ENCODE measurements at regions of chr15 and their contacts with region 1.

Region 1: DNA sequence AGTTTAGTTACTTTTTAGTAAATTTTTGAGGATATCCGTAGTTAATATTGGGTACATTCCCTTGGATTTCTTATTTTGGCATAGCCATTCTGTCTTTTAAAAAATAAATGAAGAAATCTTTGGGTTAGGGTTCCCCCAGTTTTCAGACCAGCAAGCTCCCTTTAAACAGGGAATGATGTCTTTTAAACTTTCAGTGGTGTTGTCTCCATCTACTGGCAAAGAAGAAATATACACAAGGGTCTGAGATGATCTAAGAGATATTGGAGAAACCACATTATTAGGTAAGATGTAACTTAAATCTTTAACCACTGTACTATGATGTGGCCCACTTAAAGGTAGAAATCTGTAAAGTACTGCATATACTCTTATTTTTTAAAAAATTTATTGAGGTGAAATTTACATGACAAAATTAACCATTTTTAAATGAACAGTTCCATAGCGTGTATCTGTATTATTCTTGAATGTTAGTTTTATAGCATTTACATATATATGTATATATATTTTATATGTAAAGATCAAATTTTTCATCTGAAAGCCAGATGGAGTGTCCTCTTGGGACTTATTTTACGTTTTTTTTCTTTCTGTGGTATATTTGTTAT is 35.1 kb upstream of the EIF3J start:
- DNase-seq: peak; percentile 17
- H3K4me3 ChIP-seq: no peak overlapping the region
- CTCF ChIP-seq: peak; percentile 42

Region 2: GRCh38 chr15:43872416-43873020 is 629.3 kb before region 1 on chr15:
- CTCF ChIA-PET with region 1: interaction called, 14 read pairs
- POLR2A ChIA-PET with region 1: no interaction called
- DNase-seq: peak; percentile 28
- H3K4me3 ChIP-seq: no peak overlapping the region
- CTCF ChIP-seq: peak; percentile 77

Region 3: DNA sequence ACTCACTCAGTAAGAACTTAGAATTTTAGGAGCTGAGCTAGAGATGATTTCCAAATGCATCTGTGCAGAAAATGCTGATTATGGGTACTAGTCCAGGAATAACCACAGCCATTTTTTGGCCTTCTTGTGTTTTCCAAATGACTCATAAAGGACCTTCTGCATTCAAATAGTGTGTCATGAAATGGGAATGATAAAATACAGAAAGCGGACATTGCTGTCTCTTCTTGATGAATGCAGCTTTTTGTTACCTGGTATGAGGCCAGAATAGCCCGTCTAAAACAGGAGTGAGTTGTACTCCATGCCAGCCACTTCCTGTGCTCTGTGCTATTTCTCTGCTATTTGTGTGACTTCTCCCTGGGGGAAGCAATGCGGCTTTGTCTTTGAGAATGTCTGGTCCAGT is 286.3 kb before region 1 on chr15:
- CTCF ChIA-PET with region 1: interaction called, 13 read pairs
- POLR2A ChIA-PET with region 1: no interaction called
- DNase-seq: peak; percentile 75
- H3K4me3 ChIP-seq: no peak overlapping the region
- CTCF ChIP-seq: no peak

Region 4: DNA sequence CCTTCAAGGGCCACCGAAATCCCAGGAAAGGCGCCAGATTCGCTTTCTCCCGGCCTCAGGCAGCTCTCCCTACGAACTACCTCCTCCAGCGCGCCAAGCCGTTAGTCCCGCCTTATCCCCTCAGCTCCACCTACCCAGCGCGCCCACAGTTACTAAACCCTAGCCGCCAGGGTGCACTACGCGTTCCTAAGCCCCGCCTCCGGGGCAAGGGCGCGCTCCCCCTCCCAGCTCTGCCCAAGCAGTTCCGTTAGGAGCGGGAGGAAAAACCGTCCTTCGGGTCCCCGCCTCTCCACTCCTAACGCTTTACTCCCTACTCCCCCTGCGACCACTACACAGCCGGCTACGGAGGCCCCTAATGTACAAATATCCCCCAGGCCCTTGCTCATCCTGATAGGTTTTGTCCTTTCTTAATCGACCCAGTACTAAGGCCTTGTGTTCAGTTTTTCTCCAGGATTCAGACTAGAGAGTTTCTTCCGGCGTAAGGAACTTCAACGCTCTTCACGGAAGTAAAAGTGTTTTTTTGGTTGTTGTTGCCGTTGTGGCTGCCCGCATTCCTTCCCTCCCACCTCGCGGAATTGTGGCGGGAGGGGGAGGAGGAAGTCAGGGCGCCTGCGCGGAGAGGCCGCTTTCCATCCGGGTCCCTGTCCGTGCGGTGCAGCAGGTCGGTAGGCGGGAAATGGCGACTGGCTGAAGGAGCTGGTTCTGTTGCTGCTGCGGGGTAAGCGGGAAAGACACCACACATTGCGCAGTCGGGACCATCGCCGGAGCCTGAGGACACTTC is 74.7 kb before region 1 on chr15 and contains the start of gene CTDSPL2:
- CTCF ChIA-PET with region 1: interaction called, 13 read pairs
- POLR2A ChIA-PET with region 1: no interaction called
- DNase-seq: peak; percentile 92
- H3K4me3 ChIP-seq: peak within 1 kb of the TSS; percentile 97
- CTCF ChIP-seq: peak; percentile 56

Region 5: DNA sequence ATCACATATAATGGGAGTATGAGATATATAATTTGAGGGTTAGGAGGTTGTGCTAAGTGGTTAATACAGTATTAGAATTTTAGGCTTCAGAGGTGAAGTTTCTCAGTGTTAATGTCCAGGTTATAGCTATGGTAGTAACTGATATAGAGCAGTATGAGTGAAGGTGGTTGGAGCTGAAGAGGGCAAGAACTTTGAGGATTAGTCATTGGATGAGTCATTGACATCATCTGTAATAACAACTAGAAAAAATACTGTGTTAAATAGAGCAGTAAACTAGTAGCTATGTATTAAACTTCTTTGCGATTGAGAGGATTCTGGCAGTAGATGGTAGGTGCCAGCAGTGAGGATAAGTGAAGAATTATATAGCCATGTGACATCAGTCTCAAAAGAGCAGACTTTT is 12.4 kb before region 1 on chr15:
- CTCF ChIA-PET with region 1: interaction called, 44 read pairs
- POLR2A ChIA-PET with region 1: no interaction called
- DNase-seq: peak; percentile 46
- H3K4me3 ChIP-seq: no peak overlapping the region
- CTCF ChIP-seq: no peak

Region 6: DNA sequence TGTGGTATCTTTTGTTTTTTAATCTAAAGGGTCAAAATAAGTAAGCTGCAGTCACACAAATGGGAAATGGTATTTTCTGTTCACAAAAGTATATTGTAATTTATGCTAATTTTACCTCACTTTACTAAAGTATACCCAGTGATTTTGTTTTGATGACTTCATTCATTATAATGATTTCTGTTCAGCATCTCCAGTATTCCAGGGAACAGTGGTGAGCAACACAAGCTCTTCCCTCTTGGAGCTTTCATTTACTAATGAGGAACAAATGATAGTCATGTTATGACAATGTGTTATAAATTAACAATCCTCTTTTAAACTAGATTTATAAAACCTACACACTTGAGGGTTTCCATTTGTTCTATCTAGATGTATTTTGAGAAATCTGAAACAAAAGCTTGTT is 14.6 kb after region 1 on chr15:
- CTCF ChIA-PET with region 1: interaction called, 14 read pairs
- POLR2A ChIA-PET with region 1: no interaction called
- DNase-seq: no peak
- H3K4me3 ChIP-seq: no peak overlapping the region
- CTCF ChIP-seq: no peak